Heart left ventricle (tissue), 16 donors: ENCODE measurements at regions of chr20 and their contacts with region 1.

Region 1: DNA sequence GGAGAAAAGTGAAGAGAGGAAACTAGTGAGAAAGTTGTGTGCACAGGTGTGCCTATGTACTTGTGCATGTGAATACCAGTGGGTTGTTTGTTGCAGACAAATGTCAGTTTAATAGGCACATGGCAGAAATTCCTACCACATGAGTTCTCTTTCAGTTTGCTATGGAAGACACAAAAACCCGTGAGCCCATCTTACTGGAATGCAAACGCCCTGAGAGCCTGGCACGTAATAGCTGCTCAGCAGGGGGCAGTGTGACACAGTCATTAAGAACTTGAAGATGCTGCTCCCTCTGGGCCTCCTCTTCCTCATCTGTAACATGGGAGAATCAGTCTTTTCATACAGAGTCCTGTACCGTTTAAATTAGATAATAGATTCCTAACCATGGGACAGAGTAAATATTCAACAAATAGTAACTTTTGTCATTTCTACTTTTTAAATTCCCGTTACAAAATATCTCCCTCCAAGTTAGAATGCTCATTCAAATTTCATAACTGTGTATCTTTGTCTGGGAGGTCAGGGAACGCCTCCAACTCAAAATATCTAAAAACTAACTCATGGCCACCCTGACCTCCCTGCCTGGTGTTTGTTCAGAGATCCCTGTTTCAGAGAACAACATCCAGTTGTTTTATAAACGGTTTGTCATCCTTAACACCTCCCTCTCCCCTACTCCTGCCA is 802.9 kb downstream of the MAFB start:
- DNase-seq: peak; percentile 54 to 82 (median 66)
- ATAC-seq: peak; percentile 71 to 86 (median 78)
- H3K4me3 ChIP-seq: no peak overlapping the region
- H3K27ac ChIP-seq: peak overlapping the region in 2 of 12 donors; percentile 0 to 4
- H3K4me1 ChIP-seq: peaks cover 0 to 9% (median 0%) of the 10 kb centered on the region in 12 donors
- H3K27me3 ChIP-seq: peaks cover 0 to 3% (median 0%) of the 10 kb centered on the region in 9 donors
- CTCF ChIP-seq: peak; percentile 35 to 70 (median 62)
- POLR2A ChIP-seq: no peak

Region 2: DNA sequence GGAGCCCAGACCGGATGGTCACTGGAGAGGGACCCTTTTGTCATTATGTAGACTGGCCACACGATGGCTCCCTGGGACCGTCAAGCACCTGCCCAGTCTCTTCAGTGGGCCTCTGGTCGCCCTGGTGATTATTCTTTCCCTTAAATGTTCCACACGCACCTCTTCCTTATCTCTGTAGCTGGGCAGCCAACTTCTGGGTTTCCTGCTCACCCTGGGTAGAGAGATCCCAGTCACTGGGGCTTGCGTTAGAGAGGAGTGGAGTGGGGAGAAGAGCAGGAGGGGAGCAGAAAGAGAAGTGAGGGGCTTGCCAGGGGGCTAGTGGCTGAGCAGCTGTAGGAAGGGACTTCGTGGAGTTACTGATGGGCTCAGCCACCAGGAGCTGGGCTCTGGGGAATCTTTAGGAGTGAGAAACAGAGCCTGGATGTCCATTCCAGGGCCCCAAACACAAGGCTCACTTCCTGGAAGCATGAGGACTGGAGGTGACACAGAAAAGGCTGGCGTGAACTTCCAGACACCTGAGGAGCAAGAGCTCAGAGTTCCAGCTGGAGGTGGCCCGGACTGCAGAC is 773.9 kb before region 1 on chr20:
- intact Hi-C with region 1: loop called in 1 of 10 experiments (anchors 10 kb)
- DNase-seq: peak in 4 of 5 donors; percentile 30 to 51 (median 39)
- ATAC-seq: peak; percentile 73 to 89 (median 84)
- H3K4me3 ChIP-seq: no peak overlapping the region
- H3K27ac ChIP-seq: no peak overlapping the region
- H3K4me1 ChIP-seq: peaks cover 0 to 5% (median 1%) of the 10 kb centered on the region in 12 donors
- H3K27me3 ChIP-seq: peaks cover 0 to 35% (median 14%) of the 10 kb centered on the region in 9 donors
- CTCF ChIP-seq: peak; percentile 43 to 71 (median 63)
- POLR2A ChIP-seq: no peak

Region 3: DNA sequence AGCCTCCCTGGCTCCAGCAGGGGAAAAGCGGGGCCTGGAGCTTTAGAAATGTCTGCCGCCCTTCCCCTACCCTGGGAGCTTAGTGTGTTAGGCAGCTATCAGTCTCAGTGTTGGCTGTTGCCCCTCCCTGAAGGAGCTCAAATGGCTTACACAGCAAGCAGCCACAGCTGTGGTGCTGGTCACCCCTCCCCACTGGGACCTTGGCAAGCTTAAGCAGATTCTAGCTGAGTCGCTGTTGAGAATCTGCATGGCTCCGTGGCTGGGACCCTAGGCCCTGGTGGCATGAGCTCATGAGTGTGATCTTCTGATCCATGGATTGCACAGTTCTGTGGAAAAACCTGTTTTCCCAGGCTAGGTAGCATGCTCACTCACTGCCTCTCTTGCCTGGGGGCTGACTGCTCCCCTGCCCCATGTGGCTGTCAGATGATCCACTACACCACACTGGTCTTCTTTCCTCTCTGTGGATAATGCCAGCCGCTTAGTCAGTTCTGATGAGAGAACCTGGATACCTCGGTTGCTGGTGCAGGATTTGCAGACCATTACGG is 88.9 kb after region 1 on chr20:
- intact Hi-C with region 1: no loop called
- DNase-seq: no peak
- ATAC-seq: no peak
- H3K4me3 ChIP-seq: no peak overlapping the region
- H3K27ac ChIP-seq: no peak overlapping the region
- H3K4me1 ChIP-seq: no peaks in the 10 kb centered on the region
- H3K27me3 ChIP-seq: no peaks in the 10 kb centered on the region
- CTCF ChIP-seq: no peak
- POLR2A ChIP-seq: no peak

Region 4: DNA sequence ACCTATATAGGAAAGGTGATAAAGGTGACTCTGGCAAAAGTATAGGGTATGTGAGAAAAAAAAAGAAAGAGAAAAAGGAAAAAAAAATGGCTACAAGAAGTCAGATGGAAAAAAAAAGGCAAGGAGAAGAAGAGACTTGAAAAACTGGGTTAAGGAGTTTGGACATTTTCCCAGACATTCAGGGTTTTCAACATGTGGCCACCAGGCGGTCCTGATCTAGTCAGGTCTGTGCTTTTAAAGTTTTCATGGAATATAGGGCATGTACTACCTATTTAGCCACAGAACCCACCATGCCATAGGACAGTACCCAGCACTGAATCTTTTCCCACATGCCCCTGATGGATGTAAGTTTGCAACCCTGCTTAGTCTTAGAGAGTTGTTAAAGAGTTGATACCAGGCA is 369.3 kb after region 1 on chr20:
- intact Hi-C with region 1: loop called in 2 of 10 experiments (anchors 5 to 10 kb)
- DNase-seq: no peak
- ATAC-seq: no peak
- H3K4me3 ChIP-seq: no peak overlapping the region
- H3K27ac ChIP-seq: no peak overlapping the region
- H3K4me1 ChIP-seq: no peaks in the 10 kb centered on the region
- H3K27me3 ChIP-seq: peaks cover 0 to 5% (median 0%) of the 10 kb centered on the region in 9 donors
- CTCF ChIP-seq: peak in 3 of 12 donors; percentile 20 to 29 (median 23)
- POLR2A ChIP-seq: no peak

Region 5: DNA sequence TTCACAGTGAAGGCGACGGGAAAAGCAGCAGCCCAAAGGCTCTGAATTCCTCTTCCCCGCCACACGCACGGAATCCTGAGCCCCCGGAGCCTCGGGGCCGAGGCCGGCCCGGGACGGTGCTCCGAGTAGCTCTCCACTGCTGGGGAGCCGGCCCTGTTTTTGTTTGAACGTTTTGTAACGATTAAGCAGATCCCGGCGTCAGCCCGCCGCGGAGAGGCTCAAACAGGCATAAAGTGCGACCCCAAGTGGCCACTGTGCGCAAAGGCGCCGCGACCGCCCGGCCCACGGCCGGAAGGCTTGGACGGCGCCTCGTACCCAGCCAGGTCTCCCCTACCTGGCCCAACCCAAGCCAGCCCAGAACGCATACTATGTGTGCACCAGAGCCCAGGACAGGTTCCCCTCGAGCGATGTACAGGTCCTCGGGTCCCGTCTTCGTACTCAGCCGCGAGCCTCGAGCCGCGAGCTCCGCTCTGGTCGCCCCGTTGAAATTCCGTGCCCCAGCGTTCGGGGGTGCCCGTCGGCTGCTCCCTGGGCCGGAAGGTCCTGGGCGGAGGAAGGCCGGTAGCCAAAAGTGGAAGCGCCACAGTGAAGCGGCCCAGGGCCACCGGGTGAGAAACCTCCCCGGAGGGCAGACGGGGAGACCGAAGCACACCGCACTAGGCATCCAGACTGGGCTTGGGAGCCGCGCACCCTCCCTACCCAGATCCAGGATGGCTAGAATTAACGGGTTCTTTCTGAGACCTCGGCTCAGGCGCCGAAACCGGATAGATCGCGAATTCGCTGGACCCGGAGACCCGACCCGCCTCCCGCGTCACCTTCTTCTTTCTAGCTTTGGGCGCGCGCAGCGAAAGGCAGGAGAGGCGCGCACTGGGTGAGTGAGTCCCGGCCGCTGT is 804.1 kb after region 1 on chr20:
- intact Hi-C with region 1: loop called (anchors 2 to 10 kb)
- DNase-seq: peak; percentile 89 to 95 (median 91)
- ATAC-seq: peak; percentile 59 to 78 (median 65)
- H3K4me3 ChIP-seq: peak overlapping the region; percentile 36 to 86 (median 70)
- H3K27ac ChIP-seq: peak overlapping the region; percentile 92 to 99 (median 98)
- H3K4me1 ChIP-seq: peaks cover 0 to 53% (median 20%) of the 10 kb centered on the region in 12 donors
- H3K27me3 ChIP-seq: peaks cover 29 to 69% (median 51%) of the 10 kb centered on the region in 9 donors
- CTCF ChIP-seq: peak; percentile 90 to 97 (median 96)
- POLR2A ChIP-seq: no peak

Region 6: DNA sequence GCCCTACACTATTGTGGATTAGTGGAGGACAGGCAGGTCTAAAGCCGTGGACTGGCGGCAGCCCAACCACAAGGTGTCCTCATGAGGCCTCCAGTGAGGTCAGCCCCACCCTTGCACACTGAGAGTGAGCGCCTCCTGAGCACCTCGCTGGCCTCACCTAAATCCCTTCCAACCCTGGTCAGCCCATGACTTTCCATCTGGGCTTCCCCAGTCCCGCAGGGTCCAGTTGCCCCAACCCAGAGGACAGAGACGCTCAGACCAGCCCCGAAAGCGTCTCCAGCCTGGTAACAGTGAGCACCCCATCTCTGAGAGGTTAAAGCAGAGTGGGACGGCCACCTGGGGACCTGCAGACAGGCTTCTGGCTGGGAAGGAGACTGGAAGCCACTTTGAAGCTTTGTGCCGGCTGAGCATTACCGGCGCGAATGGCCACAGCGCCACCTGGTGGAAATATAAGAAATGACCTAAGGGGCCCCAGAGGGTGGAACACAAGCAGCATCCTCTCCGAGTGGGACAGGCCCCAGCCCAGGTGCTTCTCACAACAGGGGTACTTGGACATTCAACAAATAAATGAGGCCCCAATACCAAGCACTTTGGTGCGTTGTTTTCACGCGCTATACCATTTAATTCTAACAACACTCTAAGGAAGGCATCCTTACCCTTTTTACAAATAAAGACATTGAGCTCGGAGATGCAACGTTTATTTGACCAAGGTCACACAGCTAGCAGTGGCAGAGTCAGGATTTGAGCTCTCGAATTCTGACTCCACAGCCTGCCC is 1076.8 kb after region 1 on chr20:
- intact Hi-C with region 1: loop called in 6 of 10 experiments (anchors 2 to 10 kb)
- DNase-seq: peak; percentile 59 to 78 (median 60)
- ATAC-seq: peak; percentile 65 to 87 (median 83)
- H3K4me3 ChIP-seq: no peak overlapping the region
- H3K27ac ChIP-seq: no peak overlapping the region
- H3K4me1 ChIP-seq: peaks cover 0 to 3% (median 0%) of the 10 kb centered on the region in 12 donors
- H3K27me3 ChIP-seq: no peaks in the 10 kb centered on the region
- CTCF ChIP-seq: peak; percentile 82 to 97 (median 91)
- POLR2A ChIP-seq: no peak